ENCODE measurements at regions of chr14 and their contacts with region 1.

Region 1: GRCh38 chr14:54773171-54773975 is 129.3 kb downstream of the GCH1 start:
- DNase-seq: peak; percentile 80 to 90 (median 86)
- H3K4me3 ChIP-seq: no peak overlapping the region
- H3K27ac ChIP-seq: peak overlapping the region; percentile 67 to 90
- H3K4me1 ChIP-seq: peaks cover 3% of the 10 kb centered on the region
- H3K27me3 ChIP-seq: no peaks in the 10 kb centered on the region
- CTCF ChIP-seq: peak; percentile 63 to 83 (median 81)
- EP300 ChIP-seq: peak; percentile 82
- POLR2A ChIP-seq: no peak

Region 2: GRCh38 chr14:54691525-54692283 is 81.7 kb before region 1 on chr14:
- intact Hi-C with region 1: loop called in 3 of 4 experiments (anchors 5 to 10 kb)
- DNase-seq: peak; percentile 70 to 83 (median 80)
- H3K4me3 ChIP-seq: no peak overlapping the region
- H3K27ac ChIP-seq: peak overlapping the region in 1 of 2 donors; percentile 35
- H3K4me1 ChIP-seq: peaks cover 9% of the 10 kb centered on the region
- H3K27me3 ChIP-seq: no peaks in the 10 kb centered on the region
- CTCF ChIP-seq: peak; percentile 69 to 80 (median 75)
- EP300 ChIP-seq: no peak
- POLR2A ChIP-seq: no peak

Measured in ovary (tissue), 10 donors.